ENCODE measurements at regions of chr2 and their contacts with region 1.

Region 1: GRCh38 chr2:226984750-226985582 is 149.1 kb downstream of the RHBDD1 start:
- DNase-seq: peak in 2 of 6 donors; percentile 11 to 40
- ATAC-seq: peak; percentile 53 to 91 (median 88)
- H3K4me3 ChIP-seq: no peak overlapping the region
- H3K27ac ChIP-seq: no peak overlapping the region
- H3K4me1 ChIP-seq: no peaks in the 10 kb centered on the region
- H3K27me3 ChIP-seq: no peaks in the 10 kb centered on the region
- CTCF ChIP-seq: peak; percentile 20 to 61 (median 34)

Region 2: DNA sequence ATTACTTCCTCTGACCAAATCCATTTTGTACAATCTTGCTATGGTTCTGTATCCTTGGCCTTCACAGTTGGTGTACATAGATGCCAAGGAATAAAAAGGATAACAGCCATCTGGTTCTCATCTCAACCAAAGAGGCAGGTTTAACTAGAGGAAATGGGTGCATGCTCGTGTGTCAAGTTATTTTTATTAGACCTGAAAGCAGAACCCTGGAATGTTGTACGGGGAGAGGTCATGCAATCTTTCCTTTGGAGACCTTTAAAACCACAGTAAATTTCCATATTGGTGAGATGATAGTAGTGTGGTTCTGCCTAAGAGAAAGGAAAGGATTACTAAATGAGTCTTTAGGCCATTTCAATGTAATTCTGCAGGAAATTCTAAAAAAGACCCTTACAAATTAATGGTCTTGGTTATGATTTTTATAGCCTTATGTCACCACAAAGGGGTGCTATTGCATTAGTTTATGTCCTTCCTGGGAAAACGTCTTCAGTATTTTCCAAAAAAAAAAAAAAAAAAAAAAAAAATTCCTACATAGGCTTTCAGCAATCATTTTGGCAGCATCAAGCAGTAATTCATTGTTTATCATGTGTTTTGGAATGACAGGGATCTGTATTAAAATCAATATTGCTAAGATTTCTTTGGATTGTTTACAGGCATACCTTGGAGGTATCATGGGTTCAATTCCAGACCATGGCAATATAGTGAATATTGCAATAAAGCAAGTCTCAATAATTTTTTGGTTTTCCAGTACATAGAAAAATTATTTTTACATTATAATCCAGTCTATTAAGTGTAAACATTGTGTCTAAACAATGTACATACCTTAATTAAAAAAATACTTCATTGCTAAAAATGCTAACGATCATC is 1314.6 kb before region 1 on chr2:
- intact Hi-C with region 1: loop called in 1 of 3 experiments (anchors 10 kb)
- DNase-seq: no peak
- ATAC-seq: peak in 2 of 4 donors; percentile 44 to 46
- H3K4me3 ChIP-seq: no peak overlapping the region
- H3K27ac ChIP-seq: no peak overlapping the region
- H3K4me1 ChIP-seq: no peaks in the 10 kb centered on the region
- H3K27me3 ChIP-seq: no peaks in the 10 kb centered on the region
- CTCF ChIP-seq: peak in 1 of 4 donors; percentile 24

Region 3: DNA sequence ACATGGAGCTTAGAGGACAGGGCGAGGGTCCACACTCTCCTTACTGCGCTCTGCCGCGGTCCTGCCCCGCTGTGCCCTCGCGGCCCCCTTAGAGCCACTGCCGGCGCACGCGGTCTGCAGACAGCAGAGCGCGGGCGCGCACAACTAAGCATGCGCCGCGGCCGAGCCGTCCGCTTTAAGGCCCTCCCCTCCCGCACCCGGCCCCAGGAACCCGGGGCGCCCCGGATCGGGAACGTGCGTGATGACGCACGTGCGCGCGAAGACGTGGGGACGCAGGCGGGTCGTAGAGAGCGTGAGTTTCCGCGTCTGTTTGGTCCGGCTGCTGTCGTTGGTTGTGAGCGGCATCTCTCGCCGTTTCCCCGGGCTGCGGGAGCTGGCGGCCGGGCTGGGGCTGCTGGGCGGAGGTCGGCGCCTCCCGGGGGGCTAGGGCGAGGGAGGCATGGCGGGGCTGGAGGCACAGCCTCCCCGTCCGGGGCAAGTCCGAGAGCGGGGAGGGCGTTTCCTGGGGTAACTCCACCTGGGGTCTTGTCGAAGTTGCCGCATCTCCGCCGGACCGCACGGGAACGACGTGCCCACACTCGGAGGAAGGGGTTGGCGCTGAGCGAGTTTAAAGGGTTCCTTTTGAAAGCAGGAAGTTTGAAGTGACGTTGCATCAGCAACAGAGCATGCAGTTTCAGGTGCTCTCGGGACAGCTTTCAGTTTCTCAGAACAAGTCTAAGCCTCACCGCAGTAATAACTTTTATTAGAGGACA is 149.0 kb before region 1 on chr2 and contains the start of gene RHBDD1:
- intact Hi-C with region 1: no loop called
- DNase-seq: peak; percentile 91 to 97 (median 93)
- ATAC-seq: peak; percentile 96 to 99 (median 98)
- H3K4me3 ChIP-seq: peak within 1 kb of the TSS; percentile 58 to 80 (median 71)
- H3K27ac ChIP-seq: peak within 1 kb of the TSS; percentile 97 to 100 (median 99)
- H3K4me1 ChIP-seq: peaks cover 10 to 20% (median 16%) of the 10 kb centered on the region in 3 donors
- H3K27me3 ChIP-seq: no peaks in the 10 kb centered on the region
- CTCF ChIP-seq: no peak
- total RNA-seq, gene RHBDD1: 18.2 to 28.9 (median 22.9) TPM

Region 4: DNA sequence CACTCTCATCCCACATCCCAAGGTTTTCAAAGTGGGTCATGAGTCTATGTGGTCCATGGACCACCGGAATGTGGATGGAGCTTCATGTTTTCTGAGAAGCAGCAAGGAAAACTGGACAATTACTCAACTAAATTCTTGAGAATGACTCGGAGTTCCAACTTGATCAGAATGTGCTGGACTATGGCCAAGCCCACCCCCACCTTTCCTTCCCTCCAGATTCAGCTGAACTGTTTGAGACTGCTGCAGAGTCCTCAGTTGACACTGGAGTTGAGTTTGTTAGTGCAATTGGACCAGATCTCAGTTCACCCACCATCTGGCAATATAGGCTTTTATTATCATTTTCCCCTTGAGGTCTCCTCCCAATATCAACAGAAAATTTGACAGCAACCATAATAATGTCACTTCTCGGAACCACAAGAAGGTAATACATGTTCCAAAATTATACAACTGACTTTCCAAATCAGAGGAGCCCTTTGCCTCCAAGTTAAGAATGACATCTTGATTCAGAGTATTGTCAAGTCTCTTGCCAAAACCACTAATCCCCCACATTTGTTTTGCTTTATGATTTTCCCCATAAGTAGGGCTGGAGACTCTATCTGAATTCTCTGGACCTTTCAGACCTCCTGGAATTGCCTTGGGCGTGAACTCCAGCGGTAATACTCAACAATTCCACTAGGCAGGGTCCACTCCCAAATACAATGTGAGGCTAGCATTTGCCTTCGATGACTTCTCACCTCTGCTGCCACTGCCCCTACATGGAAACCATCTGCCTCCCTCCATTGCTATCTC is 170.2 kb after region 1 on chr2:
- intact Hi-C with region 1: no loop called
- DNase-seq: no peak
- ATAC-seq: no peak
- H3K4me3 ChIP-seq: no peak overlapping the region
- H3K27ac ChIP-seq: no peak overlapping the region
- H3K4me1 ChIP-seq: peaks cover 0 to 3% (median 3%) of the 10 kb centered on the region in 3 donors
- H3K27me3 ChIP-seq: no peaks in the 10 kb centered on the region
- CTCF ChIP-seq: no peak

Measured in pancreas (tissue), 10 donors.